HEK293 (cell line): ENCODE measurements at regions of chr5 and their contacts with region 1.

Region 1: GRCh38 chr5:137660349-137660817 is 75.5 kb downstream of the KLHL3 start:
- H3K4me3 ChIP-seq: no peak overlapping the region
- H3K27ac ChIP-seq: no peak overlapping the region
- H3K4me1 ChIP-seq: 0 out of 2 replicates have a peak, but pooled peaks cover 2% of the 10 kb centered on the region
- CTCF ChIP-seq: peak; percentile 69

Region 2: DNA sequence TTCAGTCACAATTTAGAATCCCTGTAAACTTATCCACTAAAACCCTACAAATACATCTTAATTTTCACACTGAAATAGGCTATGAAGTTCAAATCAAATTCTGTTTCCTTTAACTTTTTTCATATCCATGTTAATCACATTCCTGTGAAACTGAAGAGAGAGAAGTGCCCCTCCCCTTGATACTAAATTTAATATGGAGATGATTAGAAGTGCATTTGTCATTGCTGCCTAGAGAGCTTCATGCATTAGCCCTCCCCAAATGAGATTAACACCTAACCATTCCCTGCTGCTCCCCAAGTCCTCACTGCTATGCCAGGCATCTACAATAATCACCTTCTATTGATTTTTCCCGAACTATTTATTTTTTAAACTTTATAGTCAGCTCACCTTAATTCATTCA is 76.1 kb before region 1 on chr5:
- CTCF ChIA-PET with region 1: no interaction called
- POLR2A ChIA-PET with region 1: no interaction called
- H3K4me3 ChIP-seq: no peak overlapping the region
- H3K27ac ChIP-seq: no peak overlapping the region
- H3K4me1 ChIP-seq: no peaks in the 10 kb centered on the region
- CTCF ChIP-seq: no peak

Region 3: DNA sequence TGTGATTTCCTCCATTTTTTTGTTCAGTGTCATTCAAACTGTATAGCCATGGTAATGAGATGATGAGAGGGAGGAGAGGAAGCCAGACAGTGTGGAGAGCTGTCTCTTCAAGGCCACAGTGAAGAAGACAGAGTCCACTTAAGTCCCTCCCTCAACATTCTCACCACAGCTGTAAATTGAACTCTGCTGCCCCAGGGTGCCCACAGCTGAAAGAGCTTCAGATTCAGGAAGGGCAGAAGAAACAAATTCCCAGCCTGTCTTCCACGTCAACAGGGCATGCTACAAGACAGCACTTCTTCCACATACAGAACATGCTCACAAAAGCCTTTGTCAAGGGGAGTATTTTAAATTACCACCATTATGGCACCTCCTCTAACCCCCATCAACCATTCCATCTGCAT is 24.9 kb before region 1 on chr5:
- CTCF ChIA-PET with region 1: interaction called, 37 read pairs
- POLR2A ChIA-PET with region 1: no interaction called
- H3K4me3 ChIP-seq: no peak overlapping the region
- H3K27ac ChIP-seq: no peak overlapping the region
- H3K4me1 ChIP-seq: no peaks in the 10 kb centered on the region
- CTCF ChIP-seq: no peak

Region 4: GRCh38 chr5:137649228-137649935 is 11.0 kb before region 1 on chr5:
- CTCF ChIA-PET with region 1: interaction called, 37 read pairs
- POLR2A ChIA-PET with region 1: no interaction called
- H3K4me3 ChIP-seq: no peak overlapping the region
- H3K27ac ChIP-seq: peak overlapping the region; percentile 3; the same call in 1 of the 2 replicates
- H3K4me1 ChIP-seq: peaks cover 9% of the 10 kb centered on the region
- CTCF ChIP-seq: no peak

Region 5: GRCh38 chr5:137712139-137712667 is 51.8 kb after region 1 on chr5:
- CTCF ChIA-PET with region 1: interaction called, 11 read pairs
- POLR2A ChIA-PET with region 1: no interaction called
- H3K4me3 ChIP-seq: no peak overlapping the region
- H3K27ac ChIP-seq: no peak overlapping the region
- H3K4me1 ChIP-seq: no peaks in the 10 kb centered on the region
- CTCF ChIP-seq: no peak

Region 6: DNA sequence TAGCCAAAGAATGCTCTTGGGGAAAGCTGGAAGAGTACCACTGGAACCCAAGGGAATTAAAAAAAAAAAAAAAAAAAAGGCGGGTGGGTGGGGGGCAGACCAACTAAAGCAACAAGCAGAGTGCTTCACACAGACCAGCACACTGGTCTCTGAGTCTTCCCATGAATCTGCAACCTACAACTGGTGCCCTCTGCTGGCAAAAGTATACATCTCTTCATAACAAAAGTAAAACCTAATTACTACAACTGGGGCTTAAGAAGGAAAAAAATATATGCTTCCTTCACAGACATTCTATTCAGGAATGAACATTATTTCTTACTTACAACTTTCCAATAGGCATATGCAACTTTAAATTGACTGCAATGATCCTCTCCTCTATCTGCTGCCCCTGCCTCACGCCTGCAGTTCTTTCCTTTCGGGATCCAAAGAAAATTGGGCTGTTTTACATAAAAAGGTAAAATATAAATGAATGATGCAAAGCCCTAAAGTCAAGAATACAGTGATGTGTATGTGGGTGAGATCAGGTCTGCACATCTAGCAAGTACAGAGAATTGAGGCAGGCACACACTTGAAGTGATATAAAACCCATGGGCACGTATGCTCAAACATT is 82.8 kb after region 1 on chr5:
- CTCF ChIA-PET with region 1: interaction called, 201 read pairs
- POLR2A ChIA-PET with region 1: interaction called, 10 read pairs
- H3K4me3 ChIP-seq: no peak overlapping the region
- H3K27ac ChIP-seq: no peak overlapping the region
- H3K4me1 ChIP-seq: no peaks in the 10 kb centered on the region
- CTCF ChIP-seq: peak; percentile 45; the same call in 1 of the 2 replicates

Region 7: DNA sequence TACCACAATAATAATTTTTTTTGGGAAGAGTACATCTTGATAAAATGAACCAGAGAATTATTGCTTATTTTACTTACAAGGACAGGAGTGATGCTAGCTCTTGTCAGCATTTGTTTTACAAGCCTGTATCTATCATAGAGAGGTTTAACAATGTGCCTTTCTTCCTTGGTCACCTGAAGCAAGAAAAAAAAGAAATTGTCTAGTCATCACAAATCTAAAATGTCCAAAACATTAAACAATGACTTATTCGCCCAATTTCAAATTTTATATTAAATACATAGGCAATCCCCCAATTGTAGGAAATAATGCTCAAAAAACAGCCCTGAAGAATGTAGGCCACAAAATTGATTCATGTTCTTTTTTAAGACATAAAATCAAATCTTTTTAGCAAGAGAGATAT is 285.4 kb after region 1 on chr5:
- CTCF ChIA-PET with region 1: no interaction called
- POLR2A ChIA-PET with region 1: no interaction called
- H3K4me3 ChIP-seq: no peak overlapping the region
- H3K27ac ChIP-seq: no peak overlapping the region
- H3K4me1 ChIP-seq: no peaks in the 10 kb centered on the region
- CTCF ChIP-seq: no peak